ENCODE measurements at regions of chr14 and their contacts with region 1.

Region 1: DNA sequence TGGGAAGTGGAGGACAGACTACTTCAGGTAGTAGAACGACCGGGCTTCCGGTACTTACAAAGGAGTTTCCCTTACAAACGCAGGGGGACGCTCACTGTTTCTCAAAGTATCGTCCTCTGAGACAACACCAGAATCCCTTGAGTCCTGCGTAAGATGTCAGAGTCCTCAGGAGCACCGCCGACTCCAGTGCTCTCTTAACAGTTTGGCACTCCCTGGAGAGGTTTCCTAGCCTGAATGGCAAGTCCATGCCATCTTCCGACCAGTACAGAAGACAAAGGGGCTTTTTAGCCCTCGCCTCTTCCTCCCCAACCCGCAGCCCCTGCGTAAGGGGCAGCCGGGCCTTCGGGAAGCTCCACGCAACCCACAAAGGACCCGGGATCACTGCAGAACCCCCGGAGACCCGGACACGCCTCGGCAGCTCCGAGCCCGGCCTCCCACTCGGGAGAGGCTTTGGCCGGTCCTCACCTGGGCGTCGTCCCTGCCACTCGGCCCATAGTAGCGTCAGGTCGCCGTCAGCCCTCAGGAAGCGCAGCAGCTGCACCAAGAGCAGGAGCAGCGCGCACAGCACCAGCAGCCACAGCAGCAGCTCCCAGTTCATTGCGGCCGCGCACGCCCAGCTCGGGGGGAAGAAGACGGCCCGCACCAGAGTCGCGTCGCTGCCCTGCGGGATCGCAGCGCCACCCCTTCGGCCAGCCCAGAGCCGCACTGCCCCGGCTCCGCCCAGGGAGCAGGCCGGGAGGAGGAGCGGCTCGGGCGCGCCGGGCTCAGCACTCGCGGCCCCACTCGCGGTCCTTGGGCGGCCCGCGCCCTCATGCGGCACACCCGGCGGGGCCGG is at the start of gene DHRS7:
- DNase-seq: peak; percentile 88
- H3K4me3 ChIP-seq: peak within 1 kb of the TSS; percentile 70
- H3K27ac ChIP-seq: peak within 1 kb of the TSS; percentile 69
- H3K4me1 ChIP-seq: peaks cover 28% of the 10 kb centered on the region
- CTCF ChIP-seq: peak; percentile 63
- total RNA-seq, gene DHRS7: 30.9 and 32.7 TPM in 2 replicates

Region 2: GRCh38 chr14:59939828-59940227 is 225.1 kb before region 1 on chr14:
- CTCF ChIA-PET with region 1: no interaction called
- POLR2A ChIA-PET with region 1: interaction called, 4 read pairs
- intact Hi-C with region 1: loop called (anchors 5 kb)
- DNase-seq: no peak
- H3K4me3 ChIP-seq: no peak overlapping the region
- H3K27ac ChIP-seq: no peak overlapping the region
- H3K4me1 ChIP-seq: no peaks in the 10 kb centered on the region
- CTCF ChIP-seq: no peak

Region 3: DNA sequence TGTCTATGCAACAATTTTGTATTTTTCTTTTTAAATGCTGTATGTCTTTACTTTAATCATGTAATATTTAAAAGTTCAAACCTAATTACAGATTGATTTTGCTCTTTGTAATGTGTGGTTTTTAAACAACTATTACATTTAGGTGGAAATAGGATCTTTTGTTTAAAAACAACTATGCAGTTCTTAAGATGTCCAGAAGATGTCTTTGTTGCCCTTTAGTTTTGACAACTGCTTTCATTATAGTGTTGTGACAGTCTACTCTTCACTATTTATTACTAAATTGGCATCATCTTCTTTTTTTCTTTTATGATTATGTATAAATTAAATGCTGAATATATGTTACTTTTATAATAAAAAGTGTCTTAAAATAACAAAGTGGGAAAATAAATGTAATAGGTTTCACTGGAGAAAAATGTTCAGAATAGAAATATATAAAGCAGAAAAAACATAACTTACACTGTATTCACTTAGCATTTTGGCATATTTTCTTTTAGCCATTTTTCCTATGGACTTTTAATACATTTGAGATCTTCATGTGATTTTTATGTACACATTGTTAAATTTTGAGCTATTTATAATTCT is 100.3 kb before region 1 on chr14:
- CTCF ChIA-PET with region 1: interaction called, 9 read pairs
- POLR2A ChIA-PET with region 1: interaction called, 6 read pairs
- intact Hi-C with region 1: loop called (anchors 1 kb)
- DNase-seq: peak; percentile 59
- H3K4me3 ChIP-seq: no peak overlapping the region
- H3K27ac ChIP-seq: no peak overlapping the region
- H3K4me1 ChIP-seq: no peaks in the 10 kb centered on the region
- CTCF ChIP-seq: peak; percentile 91

Region 4: GRCh38 chr14:60151715-60152114 is 13.2 kb before region 1 on chr14:
- CTCF ChIA-PET with region 1: no interaction called
- POLR2A ChIA-PET with region 1: interaction called, 13 read pairs
- intact Hi-C with region 1: no loop called
- DNase-seq: peak; percentile 78
- H3K4me3 ChIP-seq: peak overlapping the region; percentile 22
- H3K27ac ChIP-seq: peak overlapping the region; percentile 55
- H3K4me1 ChIP-seq: peaks cover 16% of the 10 kb centered on the region
- CTCF ChIP-seq: no peak

Measured in OCI-LY7 (cell line).